Activated naive CD4-positive, alpha-beta T cell treated with anti-CD3 and anti-CD28 coated beads for 36 hours (primary cell): ENCODE measurements at regions of chr7 and their contacts with region 1.

Region 1: GRCh38 chr7:44847508-44847920 is 373 bp downstream of the H2AZ2 start:
- DNase-seq: peak; percentile 92
- H3K4me3 Mint-ChIP-seq: peak overlapping the region; percentile 92
- H3K27ac Mint-ChIP-seq: peak overlapping the region; percentile 95
- H3K4me1 Mint-ChIP-seq: peaks cover 41% of the 10 kb centered on the region
- H3K27me3 Mint-ChIP-seq: no peaks in the 10 kb centered on the region

Region 2: DNA sequence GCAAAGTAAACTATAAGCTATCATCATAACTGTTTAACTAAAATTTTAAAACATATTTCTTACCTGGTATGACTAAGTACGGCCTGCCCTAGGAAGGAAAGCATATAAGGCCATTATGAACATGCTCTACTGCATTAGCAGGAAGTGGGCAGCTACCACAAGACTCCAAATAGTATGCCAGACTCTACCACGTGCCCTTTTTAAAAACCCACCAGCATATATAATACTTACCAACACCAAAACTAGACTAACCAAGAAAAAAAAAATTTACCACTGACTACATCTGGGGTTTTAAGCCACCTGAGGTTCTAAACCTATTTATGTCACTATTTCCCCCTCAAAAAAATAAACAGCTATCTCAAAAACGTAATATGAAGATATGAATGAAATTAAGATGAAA is 387.2 kb before region 1 on chr7:
- CTCF ChIA-PET with region 1: interaction called, 3 read pairs
- intact Hi-C with region 1: loop called (anchors 2 kb)
- DNase-seq: peak; percentile 74
- H3K4me3 Mint-ChIP-seq: no peak overlapping the region
- H3K27ac Mint-ChIP-seq: peak overlapping the region; percentile 94
- H3K4me1 Mint-ChIP-seq: peaks cover 72% of the 10 kb centered on the region
- H3K27me3 Mint-ChIP-seq: no peaks in the 10 kb centered on the region

Region 3: GRCh38 chr7:44606450-44607254 is 240.9 kb before region 1 on chr7 and contains the start of gene OGDH:
- CTCF ChIA-PET with region 1: no interaction called
- intact Hi-C with region 1: loop called (anchors 1 kb)
- DNase-seq: peak; percentile 100
- H3K4me3 Mint-ChIP-seq: peak within 1 kb of the TSS; percentile 96
- H3K27ac Mint-ChIP-seq: peak within 1 kb of the TSS; percentile 97
- H3K4me1 Mint-ChIP-seq: peaks cover 31% of the 10 kb centered on the region
- H3K27me3 Mint-ChIP-seq: no peaks in the 10 kb centered on the region
- total RNA-seq, gene OGDH: 73.9 to 78.4 TPM

Region 4: DNA sequence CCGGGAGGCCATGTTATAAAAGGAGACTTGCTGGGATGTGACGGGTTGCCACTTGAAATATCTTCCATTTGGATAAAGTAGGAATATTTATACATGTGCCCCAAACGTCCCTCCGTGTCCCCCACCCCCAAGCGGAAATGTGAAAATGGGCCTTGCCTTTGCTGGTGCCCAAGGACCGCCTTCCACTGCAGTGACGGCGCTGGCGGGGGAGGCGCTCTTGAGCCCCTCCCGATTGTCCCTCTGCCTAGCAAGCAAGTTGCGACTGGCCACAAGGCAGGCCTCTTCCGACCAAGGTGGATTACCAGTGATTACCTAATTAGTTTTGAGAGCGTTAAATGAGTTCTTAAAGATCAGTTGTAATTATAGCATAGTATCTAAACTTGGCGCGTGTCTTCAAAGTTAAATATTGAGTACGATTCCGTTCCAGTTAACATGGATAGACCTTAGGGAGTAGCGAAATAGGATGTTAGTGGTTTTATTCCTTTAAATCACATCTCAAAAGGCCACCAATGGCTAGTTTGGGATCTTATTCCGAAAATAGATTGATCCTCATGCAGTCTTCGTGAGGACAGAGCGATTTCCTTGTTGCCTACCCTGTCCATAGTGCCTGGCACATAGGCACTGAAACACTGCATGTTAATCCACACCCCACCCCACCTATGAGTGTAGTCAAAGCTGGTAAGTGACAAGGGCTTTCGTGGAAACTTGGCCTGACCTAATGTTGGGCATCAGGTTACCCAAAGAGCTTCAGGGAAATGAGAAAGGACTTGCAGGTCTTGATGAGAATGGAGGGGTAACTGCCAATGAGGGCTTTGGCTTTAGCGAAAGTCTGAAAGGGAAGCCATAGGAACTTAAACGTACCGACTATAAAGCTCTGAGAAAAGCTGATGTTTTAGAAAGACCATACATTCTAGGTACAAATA is 49.9 kb before region 1 on chr7:
- CTCF ChIA-PET with region 1: interaction called, 7 read pairs
- intact Hi-C with region 1: loop called (anchors 1 kb)
- DNase-seq: peak; percentile 89
- H3K4me3 Mint-ChIP-seq: peak overlapping the region; percentile 98
- H3K27ac Mint-ChIP-seq: peak overlapping the region; percentile 98
- H3K4me1 Mint-ChIP-seq: peaks cover 30% of the 10 kb centered on the region
- H3K27me3 Mint-ChIP-seq: no peaks in the 10 kb centered on the region

Region 5: GRCh38 chr7:44914992-44915607 is 67.6 kb after region 1 on chr7:
- CTCF ChIA-PET with region 1: interaction called, 3 read pairs
- intact Hi-C with region 1: loop called (anchors 1 kb)
- DNase-seq: peak; percentile 88
- H3K4me3 Mint-ChIP-seq: no peak overlapping the region
- H3K27ac Mint-ChIP-seq: peak overlapping the region; percentile 83
- H3K4me1 Mint-ChIP-seq: peaks cover 17% of the 10 kb centered on the region
- H3K27me3 Mint-ChIP-seq: no peaks in the 10 kb centered on the region

Region 6: GRCh38 chr7:45033261-45033930 is 185.9 kb after region 1 on chr7:
- CTCF ChIA-PET with region 1: no interaction called
- intact Hi-C with region 1: no loop called
- DNase-seq: no peak
- H3K4me3 Mint-ChIP-seq: no peak overlapping the region
- H3K27ac Mint-ChIP-seq: peak overlapping the region; percentile 84
- H3K4me1 Mint-ChIP-seq: peaks cover 79% of the 10 kb centered on the region
- H3K27me3 Mint-ChIP-seq: no peaks in the 10 kb centered on the region

Region 7: GRCh38 chr7:45111298-45112223 is 264.0 kb after region 1 on chr7 and contains the start of gene TBRG4:
- CTCF ChIA-PET with region 1: no interaction called
- intact Hi-C with region 1: loop called (anchors 2 kb)
- DNase-seq: peak; percentile 96
- H3K4me3 Mint-ChIP-seq: peak within 1 kb of the TSS; percentile 85
- H3K27ac Mint-ChIP-seq: peak within 1 kb of the TSS; percentile 89
- H3K4me1 Mint-ChIP-seq: peaks cover 40% of the 10 kb centered on the region
- H3K27me3 Mint-ChIP-seq: no peaks in the 10 kb centered on the region
- total RNA-seq, gene TBRG4: 127 to 136 TPM